Activated CD4-positive, alpha-beta T cell treated with anti-CD3 and anti-CD28 coated beads, Interleukin-2, amount 10 ng/mL, durations not matched to agents 24 days and 14 days (primary cell): ENCODE measurements at regions of chr3 and their contacts with region 1.

Region 1: GRCh38 chr3:122101646-122102045 is 46.5 kb downstream of the CD86 start:
- DNase-seq: peak; percentile 85
- H3K4me3 Mint-ChIP-seq: peak overlapping the region; percentile 71
- H3K27ac Mint-ChIP-seq: peak overlapping the region; percentile 80
- H3K4me1 Mint-ChIP-seq: peaks cover 37% of the 10 kb centered on the region
- H3K27me3 Mint-ChIP-seq: peaks cover 1% of the 10 kb centered on the region

Region 2: GRCh38 chr3:121749276-121750086 is 352.2 kb before region 1 on chr3 and contains the start of gene GOLGB1:
- intact Hi-C with region 1: loop called (anchors 5 kb)
- DNase-seq: peak; percentile 97
- H3K4me3 Mint-ChIP-seq: no peak within 1 kb of the TSS
- H3K27ac Mint-ChIP-seq: no peak within 1 kb of the TSS
- H3K4me1 Mint-ChIP-seq: peaks cover 9% of the 10 kb centered on the region
- H3K27me3 Mint-ChIP-seq: peaks cover 20% of the 10 kb centered on the region
- total RNA-seq, gene GOLGB1: 21.0 and 22.2 TPM in 2 replicates

Region 3: GRCh38 chr3:121883507-121883906 is 218.1 kb before region 1 on chr3:
- intact Hi-C with region 1: loop called (anchors 5 kb)
- DNase-seq: no peak
- H3K4me3 Mint-ChIP-seq: no peak overlapping the region
- H3K27ac Mint-ChIP-seq: no peak overlapping the region
- H3K4me1 Mint-ChIP-seq: no peaks in the 10 kb centered on the region
- H3K27me3 Mint-ChIP-seq: no peaks in the 10 kb centered on the region

Region 4: GRCh38 chr3:121998030-121998580 is 103.5 kb before region 1 on chr3:
- intact Hi-C with region 1: no loop called
- DNase-seq: no peak
- H3K4me3 Mint-ChIP-seq: no peak overlapping the region
- H3K27ac Mint-ChIP-seq: peak overlapping the region; percentile 75
- H3K4me1 Mint-ChIP-seq: peaks cover 27% of the 10 kb centered on the region
- H3K27me3 Mint-ChIP-seq: peaks cover 5% of the 10 kb centered on the region

Region 5: DNA sequence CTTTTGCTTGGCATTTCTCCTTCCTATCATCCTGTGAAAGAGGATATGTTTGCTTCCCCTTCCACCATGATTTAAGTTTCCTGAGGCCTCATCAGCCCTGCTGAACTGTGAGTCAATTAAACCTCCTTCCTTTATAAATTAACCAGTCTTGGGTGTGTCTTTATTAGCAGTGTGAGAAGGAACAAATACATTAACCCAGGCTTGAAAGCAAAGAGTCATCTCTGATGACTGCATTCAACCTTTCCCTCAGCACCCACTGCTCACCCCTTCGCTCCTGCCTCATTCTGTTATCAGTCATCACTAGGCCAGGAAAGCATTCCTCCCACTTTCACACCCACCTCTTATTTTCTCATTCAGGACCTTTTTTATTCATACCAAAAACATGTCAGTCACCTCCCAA is 22.2 kb after region 1 on chr3:
- intact Hi-C with region 1: loop called (anchors 2 kb)
- DNase-seq: no peak
- H3K4me3 Mint-ChIP-seq: no peak overlapping the region
- H3K27ac Mint-ChIP-seq: peak overlapping the region; percentile 3
- H3K4me1 Mint-ChIP-seq: peaks cover 8% of the 10 kb centered on the region
- H3K27me3 Mint-ChIP-seq: peaks cover 27% of the 10 kb centered on the region

Region 6: GRCh38 chr3:122169908-122170307 is 68.3 kb after region 1 on chr3:
- intact Hi-C with region 1: no loop called
- DNase-seq: peak; percentile 34
- H3K4me3 Mint-ChIP-seq: no peak overlapping the region
- H3K27ac Mint-ChIP-seq: no peak overlapping the region
- H3K4me1 Mint-ChIP-seq: no peaks in the 10 kb centered on the region
- H3K27me3 Mint-ChIP-seq: peaks cover 8% of the 10 kb centered on the region

Region 7: GRCh38 chr3:122258757-122259371 is 157.2 kb after region 1 on chr3:
- intact Hi-C with region 1: loop called (anchors 1 kb)
- DNase-seq: peak; percentile 85
- H3K4me3 Mint-ChIP-seq: no peak overlapping the region
- H3K27ac Mint-ChIP-seq: no peak overlapping the region
- H3K4me1 Mint-ChIP-seq: peaks cover 16% of the 10 kb centered on the region
- H3K27me3 Mint-ChIP-seq: peaks cover 12% of the 10 kb centered on the region

Region 8: DNA sequence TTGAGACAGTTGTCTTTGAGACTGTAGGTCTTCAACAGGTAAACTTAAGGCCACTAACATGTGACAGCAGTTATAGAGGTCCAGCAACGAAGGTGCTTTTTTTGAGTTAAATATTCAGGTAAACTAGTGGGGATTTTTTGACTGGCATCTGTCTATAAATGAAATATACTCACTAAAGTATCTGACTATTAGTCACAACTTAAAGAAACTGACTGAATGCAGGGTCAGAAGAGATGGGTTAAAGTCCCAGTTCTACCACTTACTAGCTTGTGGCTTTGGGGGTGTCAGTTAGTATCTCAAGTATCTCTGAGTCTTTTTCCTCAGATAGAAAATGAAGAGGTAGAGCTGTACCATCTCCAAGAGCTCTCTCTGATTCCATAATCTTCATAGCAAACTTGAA is 263.4 kb after region 1 on chr3:
- intact Hi-C with region 1: loop called (anchors 1 kb)
- DNase-seq: no peak
- H3K4me3 Mint-ChIP-seq: peak overlapping the region; percentile 30
- H3K27ac Mint-ChIP-seq: peak overlapping the region; percentile 95
- H3K4me1 Mint-ChIP-seq: peaks cover 33% of the 10 kb centered on the region
- H3K27me3 Mint-ChIP-seq: no peaks in the 10 kb centered on the region

Region 9: GRCh38 chr3:122484985-122485384 is 383.3 kb after region 1 on chr3:
- intact Hi-C with region 1: loop called (anchors 5 kb)
- DNase-seq: no peak
- H3K4me3 Mint-ChIP-seq: no peak overlapping the region
- H3K27ac Mint-ChIP-seq: peak overlapping the region; percentile 54
- H3K4me1 Mint-ChIP-seq: peaks cover 41% of the 10 kb centered on the region
- H3K27me3 Mint-ChIP-seq: no peaks in the 10 kb centered on the region